Heart left ventricle (tissue), 16 donors: ENCODE measurements at regions of chrX and their contacts with region 1.

Region 1: DNA sequence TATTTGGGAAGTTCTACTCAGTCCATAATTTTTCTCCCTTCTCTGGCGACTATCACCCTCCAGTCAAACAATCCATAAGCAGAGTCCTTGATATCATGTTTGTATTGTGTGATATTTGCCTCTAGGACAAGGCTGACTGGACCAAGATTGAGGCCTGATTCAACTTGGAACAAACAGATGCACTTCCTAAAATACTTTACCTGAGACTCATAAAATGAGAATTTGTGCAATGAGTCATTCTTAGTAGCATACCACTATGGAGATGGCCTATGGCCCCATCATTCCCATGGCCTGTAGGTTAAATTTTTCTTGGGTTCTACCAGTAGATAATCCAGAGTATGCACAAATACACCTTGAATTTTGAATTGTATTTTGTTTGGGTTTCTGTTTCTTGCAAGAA is 74.2 kb upstream of the DMD start:
- DNase-seq: no peak
- ATAC-seq: no peak
- H3K4me3 ChIP-seq: no peak overlapping the region
- H3K27ac ChIP-seq: no peak overlapping the region
- H3K4me1 ChIP-seq: no peaks in the 10 kb centered on the region
- H3K27me3 ChIP-seq: no peaks in the 10 kb centered on the region
- CTCF ChIP-seq: no peak
- POLR2A ChIP-seq: no peak

Region 2: GRCh38 chrX:33686105-33686504 is 400.6 kb after region 1 on chrX:
- intact Hi-C with region 1: loop called in 1 of 10 experiments (anchors 10 kb)
- DNase-seq: no peak
- ATAC-seq: no peak
- H3K4me3 ChIP-seq: no peak overlapping the region
- H3K27ac ChIP-seq: no peak overlapping the region
- H3K4me1 ChIP-seq: no peaks in the 10 kb centered on the region
- H3K27me3 ChIP-seq: no peaks in the 10 kb centered on the region
- CTCF ChIP-seq: no peak
- POLR2A ChIP-seq: no peak